Activated CD4-positive, alpha-beta memory T cell treated with anti-CD3 and anti-CD28 coated beads for 36 hours (primary cell): ENCODE measurements at regions of chr5 and their contacts with region 1.

Region 1: GRCh38 chr5:91383027-91383955 is at the start of gene ARRDC3:
- DNase-seq: peak; percentile 98
- H3K4me3 Mint-ChIP-seq: peak within 1 kb of the TSS; percentile 86
- H3K27ac Mint-ChIP-seq: peak within 1 kb of the TSS; percentile 100
- H3K4me1 Mint-ChIP-seq: peaks cover 17% of the 10 kb centered on the region
- H3K27me3 Mint-ChIP-seq: no peaks in the 10 kb centered on the region
- total RNA-seq, gene ARRDC3: 17.9 to 19.0 TPM

Region 2: GRCh38 chr5:90474235-90475109 is 908.8 kb before region 1 on chr5 and contains the starts of genes MBLAC2 and POLR3G:
- CTCF ChIA-PET with region 1: interaction called, 3 read pairs
- POLR2A ChIA-PET with region 1: interaction called, 3 read pairs
- intact Hi-C with region 1: loop called (anchors 1 kb)
- DNase-seq: peak; percentile 96
- H3K4me3 Mint-ChIP-seq: peak within 1 kb of the TSS; percentile 92
- H3K27ac Mint-ChIP-seq: peak within 1 kb of the TSS; percentile 88
- H3K4me1 Mint-ChIP-seq: peaks cover 23% of the 10 kb centered on the region
- H3K27me3 Mint-ChIP-seq: no peaks in the 10 kb centered on the region
- total RNA-seq, gene MBLAC2: 3.3 to 3.5 TPM
- total RNA-seq, gene POLR3G: 9.6 to 9.7 TPM

Region 3: DNA sequence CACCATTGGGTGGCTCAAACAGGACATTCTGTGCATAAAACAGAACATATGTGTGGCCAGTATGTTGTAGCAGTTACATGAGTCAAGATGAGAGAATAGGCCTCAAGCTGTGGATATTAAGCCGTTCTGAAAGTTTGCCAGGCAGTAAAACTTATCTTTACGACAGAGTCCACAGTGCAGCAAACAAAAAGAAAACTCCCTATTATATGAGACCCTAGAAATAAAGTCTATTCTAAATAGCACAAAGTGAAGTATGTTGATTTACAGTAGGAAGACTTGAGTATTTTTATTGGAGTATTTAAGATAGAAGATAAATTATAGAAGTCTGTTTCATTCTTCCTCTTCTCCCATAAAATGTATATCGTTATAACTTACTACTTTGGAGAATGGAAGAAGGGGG is 553.2 kb before region 1 on chr5:
- CTCF ChIA-PET with region 1: no interaction called
- POLR2A ChIA-PET with region 1: no interaction called
- intact Hi-C with region 1: no loop called
- DNase-seq: no peak
- H3K4me3 Mint-ChIP-seq: no peak overlapping the region
- H3K27ac Mint-ChIP-seq: no peak overlapping the region
- H3K4me1 Mint-ChIP-seq: no peaks in the 10 kb centered on the region
- H3K27me3 Mint-ChIP-seq: peaks cover 8% of the 10 kb centered on the region

Region 4: GRCh38 chr5:90932052-90932699 is 451.1 kb before region 1 on chr5:
- CTCF ChIA-PET with region 1: interaction called, 66 read pairs
- POLR2A ChIA-PET with region 1: no interaction called
- intact Hi-C with region 1: loop called (anchors 1 kb)
- DNase-seq: peak; percentile 37
- H3K4me3 Mint-ChIP-seq: no peak overlapping the region
- H3K27ac Mint-ChIP-seq: no peak overlapping the region
- H3K4me1 Mint-ChIP-seq: no peaks in the 10 kb centered on the region
- H3K27me3 Mint-ChIP-seq: peaks cover 10% of the 10 kb centered on the region

Region 5: GRCh38 chr5:91170266-91170665 is 213.0 kb before region 1 on chr5:
- CTCF ChIA-PET with region 1: interaction called, 3 read pairs
- POLR2A ChIA-PET with region 1: no interaction called
- intact Hi-C with region 1: loop called (anchors 1 kb)
- DNase-seq: no peak
- H3K4me3 Mint-ChIP-seq: no peak overlapping the region
- H3K27ac Mint-ChIP-seq: peak overlapping the region; percentile 4
- H3K4me1 Mint-ChIP-seq: peaks cover 14% of the 10 kb centered on the region
- H3K27me3 Mint-ChIP-seq: peaks cover 9% of the 10 kb centered on the region

Region 6: GRCh38 chr5:91235271-91235694 is 148.0 kb before region 1 on chr5:
- CTCF ChIA-PET with region 1: interaction called, 26 read pairs
- POLR2A ChIA-PET with region 1: no interaction called
- intact Hi-C with region 1: no loop called
- DNase-seq: no peak
- H3K4me3 Mint-ChIP-seq: no peak overlapping the region
- H3K27ac Mint-ChIP-seq: no peak overlapping the region
- H3K4me1 Mint-ChIP-seq: peaks cover 2% of the 10 kb centered on the region
- H3K27me3 Mint-ChIP-seq: peaks cover 3% of the 10 kb centered on the region

Region 7: GRCh38 chr5:91280362-91281269 is 102.7 kb before region 1 on chr5:
- CTCF ChIA-PET with region 1: interaction called, 34 read pairs
- POLR2A ChIA-PET with region 1: interaction called, 62 read pairs
- intact Hi-C with region 1: loop called (anchors 1 kb)
- DNase-seq: peak; percentile 95
- H3K4me3 Mint-ChIP-seq: peak overlapping the region; percentile 84
- H3K27ac Mint-ChIP-seq: peak overlapping the region; percentile 99
- H3K4me1 Mint-ChIP-seq: peaks cover 51% of the 10 kb centered on the region
- H3K27me3 Mint-ChIP-seq: no peaks in the 10 kb centered on the region

Region 8: GRCh38 chr5:91541696-91542095 is 158.4 kb after region 1 on chr5:
- CTCF ChIA-PET with region 1: no interaction called
- POLR2A ChIA-PET with region 1: no interaction called
- intact Hi-C with region 1: no loop called
- DNase-seq: no peak
- H3K4me3 Mint-ChIP-seq: no peak overlapping the region
- H3K27ac Mint-ChIP-seq: no peak overlapping the region
- H3K4me1 Mint-ChIP-seq: peaks cover 3% of the 10 kb centered on the region
- H3K27me3 Mint-ChIP-seq: no peaks in the 10 kb centered on the region